PC-9 (cell line): ENCODE measurements at regions of chrX and their contacts with region 1.

Region 1: GRCh38 chrX:4263030-4263803 is 549.8 kb upstream of the PRKX start:
- DNase-seq: no peak
- H3K4me3 ChIP-seq: no peak overlapping the region
- H3K27ac ChIP-seq: no peak overlapping the region
- H3K4me1 ChIP-seq: no peaks in the 10 kb centered on the region
- H3K27me3 ChIP-seq: no peaks in the 10 kb centered on the region
- CTCF ChIP-seq: peak; percentile 60

Region 2: DNA sequence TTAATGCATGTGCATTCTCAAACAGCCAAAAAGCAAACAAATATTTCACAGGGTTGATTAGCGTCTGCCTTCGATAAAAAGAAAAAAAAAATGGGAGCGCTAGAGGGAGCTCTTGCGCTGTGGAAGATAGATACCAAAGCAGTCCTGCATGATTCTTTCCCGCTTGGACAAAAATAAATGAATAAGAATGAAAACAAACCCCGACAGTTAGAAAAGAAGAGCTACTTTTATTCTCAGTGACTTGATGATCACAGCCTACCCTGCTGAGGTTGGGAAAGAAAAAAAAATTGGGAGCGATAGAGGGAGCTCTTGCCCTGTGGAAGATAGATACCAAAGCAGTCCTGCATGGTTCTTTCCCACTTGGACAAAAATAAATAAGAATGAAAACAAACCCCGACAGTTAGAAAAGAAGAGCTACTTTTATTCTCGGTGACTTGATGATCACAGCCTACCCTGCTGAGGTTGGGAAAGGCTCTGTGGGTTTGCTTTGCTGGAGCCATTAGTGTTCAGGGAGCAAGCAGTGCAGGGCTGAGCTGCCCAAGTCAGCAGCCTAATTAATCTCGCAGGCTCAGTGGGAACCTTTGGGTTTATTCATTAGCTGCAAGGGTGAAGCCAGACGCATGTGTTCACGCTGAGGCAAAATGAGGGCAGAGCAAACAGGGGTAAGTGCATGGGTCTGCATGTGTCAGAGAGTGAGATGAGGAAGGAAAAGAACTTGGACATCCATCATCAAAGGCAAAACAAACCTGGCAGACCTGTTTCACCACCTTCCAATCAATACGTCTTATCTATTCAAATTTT is 300.5 kb before region 1 on chrX:
- CTCF ChIA-PET with region 1: no interaction called
- POLR2A ChIA-PET with region 1: no interaction called
- intact Hi-C with region 1: loop called (anchors 5 kb)
- DNase-seq: peak; percentile 5 to 36
- H3K4me3 ChIP-seq: peak overlapping the region; percentile 21; the same call in 1 of the 2 replicates
- H3K27ac ChIP-seq: no peak overlapping the region
- H3K4me1 ChIP-seq: peaks cover 12% of the 10 kb centered on the region
- H3K27me3 ChIP-seq: no peaks in the 10 kb centered on the region
- CTCF ChIP-seq: peak; percentile 86